PC-3 (cell line): ENCODE measurements at regions of chr21 and their contacts with region 1.

Region 1: GRCh38 chr21:25385911-25386474 is 221.3 kb downstream of the MRPL39 start:
- DNase-seq: peak; percentile 90
- ATAC-seq: peak; percentile 93
- H3K4me3 ChIP-seq: no peak overlapping the region
- H3K27ac ChIP-seq: no peak overlapping the region
- H3K4me1 ChIP-seq: peaks cover 15% of the 10 kb centered on the region
- H3K27me3 ChIP-seq: no peaks in the 10 kb centered on the region
- CTCF ChIP-seq: peak; percentile 85

Region 2: DNA sequence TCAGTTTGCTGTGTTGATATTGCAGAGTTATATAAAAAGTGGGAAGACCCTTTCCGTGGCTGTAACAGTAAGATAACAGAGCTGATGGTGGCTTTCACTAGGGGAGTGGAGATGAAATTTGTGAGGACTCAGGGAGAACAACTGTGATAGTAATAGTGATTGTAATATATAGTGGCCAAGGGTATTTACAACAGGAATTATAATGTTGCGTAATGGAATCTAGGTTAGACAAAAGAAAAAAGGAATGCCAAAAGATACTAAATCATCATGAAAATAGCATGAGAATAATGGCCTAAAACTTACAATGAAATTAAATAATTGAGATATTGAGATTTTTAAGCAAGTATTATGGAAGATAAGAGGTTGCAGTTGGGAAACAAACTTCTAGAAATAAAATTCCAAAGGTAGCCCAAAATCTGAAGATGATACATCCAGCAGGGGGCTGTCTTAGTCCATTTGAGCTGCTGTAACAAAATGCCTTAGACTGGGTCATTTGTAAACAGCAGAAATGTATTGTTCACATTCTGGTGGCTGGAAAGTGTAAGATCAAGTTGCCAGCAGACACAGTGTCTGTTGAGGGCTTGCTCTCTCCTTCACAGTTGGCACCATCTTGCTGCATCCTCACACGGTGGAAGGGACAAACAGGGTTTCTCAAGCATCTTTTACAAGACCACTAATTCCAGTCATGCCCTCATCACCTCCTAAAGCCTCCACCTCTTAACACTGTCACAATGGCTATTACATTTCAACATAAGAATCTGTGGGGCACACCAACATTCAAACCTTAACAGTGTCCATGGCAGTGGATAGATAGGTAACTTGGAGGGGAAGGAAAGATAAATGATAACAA is 489.9 kb before region 1 on chr21:
- CTCF ChIA-PET with region 1: no interaction called
- POLR2A ChIA-PET with region 1: no interaction called
- intact Hi-C with region 1: loop called (anchors 1 kb)
- DNase-seq: peak; percentile 58
- ATAC-seq: peak; percentile 94
- H3K4me3 ChIP-seq: no peak overlapping the region
- H3K27ac ChIP-seq: no peak overlapping the region
- H3K4me1 ChIP-seq: no peaks in the 10 kb centered on the region
- H3K27me3 ChIP-seq: no peaks in the 10 kb centered on the region
- CTCF ChIP-seq: peak; percentile 71

Region 3: DNA sequence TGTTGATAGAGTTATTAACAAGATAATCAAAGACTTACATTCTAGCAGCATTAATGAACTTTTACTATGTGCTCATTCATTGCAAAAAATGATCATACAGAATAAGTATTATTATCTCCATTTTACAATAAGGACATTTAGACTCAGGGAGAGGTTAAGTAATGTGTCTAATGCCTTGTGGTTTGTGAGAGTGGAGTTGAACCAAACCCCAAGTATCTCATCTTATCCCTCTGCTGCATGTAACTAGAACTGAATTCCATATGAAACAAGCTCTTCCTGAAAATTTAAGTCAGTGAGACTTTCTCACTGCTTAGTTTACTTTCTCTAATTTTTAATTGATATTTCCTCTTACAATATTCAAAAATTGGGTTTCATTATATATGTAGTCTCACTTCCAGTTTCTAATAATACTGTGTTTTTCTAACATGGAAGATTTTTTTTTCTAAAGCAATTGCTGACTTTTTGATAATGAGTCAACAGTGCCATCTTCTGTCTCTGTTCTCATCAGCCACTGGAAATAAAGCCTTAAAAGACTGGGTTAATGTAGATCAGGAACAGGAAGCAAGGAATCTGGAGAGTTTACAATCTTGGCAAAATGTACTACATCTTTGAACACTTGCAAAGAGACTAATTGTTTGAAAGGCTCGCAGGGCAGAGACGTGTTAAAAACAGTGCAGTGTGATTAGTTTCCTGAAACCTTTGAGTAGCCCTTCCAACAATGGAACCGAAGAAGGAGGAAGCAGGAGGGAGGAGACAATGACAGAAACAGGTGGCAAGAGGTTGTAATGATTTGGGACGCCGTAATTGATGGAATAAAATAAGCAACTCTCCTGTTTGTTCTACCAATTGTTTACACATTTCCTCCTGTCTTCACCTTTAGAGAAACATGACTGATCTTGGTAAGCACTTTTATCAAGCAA is 346.3 kb before region 1 on chr21:
- CTCF ChIA-PET with region 1: no interaction called
- POLR2A ChIA-PET with region 1: no interaction called
- intact Hi-C with region 1: loop called (anchors 5 kb)
- DNase-seq: peak; percentile 47
- ATAC-seq: peak; percentile 80
- H3K4me3 ChIP-seq: peak overlapping the region; percentile 50
- H3K27ac ChIP-seq: no peak overlapping the region
- H3K4me1 ChIP-seq: no peaks in the 10 kb centered on the region
- H3K27me3 ChIP-seq: no peaks in the 10 kb centered on the region
- CTCF ChIP-seq: peak; percentile 61

Region 4: GRCh38 chr21:25283720-25284119 is 102.3 kb before region 1 on chr21:
- CTCF ChIA-PET with region 1: interaction called, 8 read pairs
- POLR2A ChIA-PET with region 1: no interaction called
- intact Hi-C with region 1: loop called (anchors 1 kb)
- DNase-seq: peak; percentile 62
- ATAC-seq: peak; percentile 53
- H3K4me3 ChIP-seq: no peak overlapping the region
- H3K27ac ChIP-seq: no peak overlapping the region
- H3K4me1 ChIP-seq: no peaks in the 10 kb centered on the region
- H3K27me3 ChIP-seq: no peaks in the 10 kb centered on the region
- CTCF ChIP-seq: peak; percentile 60

Region 5: GRCh38 chr21:25350056-25350455 is 35.9 kb before region 1 on chr21:
- CTCF ChIA-PET with region 1: interaction called, 12 read pairs
- POLR2A ChIA-PET with region 1: no interaction called
- intact Hi-C with region 1: loop called (anchors 1 kb)
- DNase-seq: peak; percentile 78
- ATAC-seq: peak; percentile 72
- H3K4me3 ChIP-seq: no peak overlapping the region
- H3K27ac ChIP-seq: no peak overlapping the region
- H3K4me1 ChIP-seq: peaks cover 12% of the 10 kb centered on the region
- H3K27me3 ChIP-seq: no peaks in the 10 kb centered on the region
- CTCF ChIP-seq: peak; percentile 82

Region 6: GRCh38 chr21:25360593-25360992 is 25.4 kb before region 1 on chr21:
- CTCF ChIA-PET with region 1: interaction called, 33 read pairs
- POLR2A ChIA-PET with region 1: no interaction called
- intact Hi-C with region 1: loop called (anchors 1 kb)
- DNase-seq: peak; percentile 40
- ATAC-seq: peak; percentile 57
- H3K4me3 ChIP-seq: no peak overlapping the region
- H3K27ac ChIP-seq: no peak overlapping the region
- H3K4me1 ChIP-seq: peaks cover 26% of the 10 kb centered on the region
- H3K27me3 ChIP-seq: no peaks in the 10 kb centered on the region
- CTCF ChIP-seq: peak; percentile 52

Region 7: GRCh38 chr21:25636727-25637126 is 250.7 kb after region 1 on chr21:
- CTCF ChIA-PET with region 1: no interaction called
- POLR2A ChIA-PET with region 1: no interaction called
- intact Hi-C with region 1: no loop called
- DNase-seq: no peak
- ATAC-seq: no peak
- H3K4me3 ChIP-seq: no peak overlapping the region
- H3K27ac ChIP-seq: no peak overlapping the region
- H3K4me1 ChIP-seq: no peaks in the 10 kb centered on the region
- H3K27me3 ChIP-seq: peaks cover 28% of the 10 kb centered on the region
- CTCF ChIP-seq: no peak